ENCODE measurements at regions of chr22 and their contacts with region 1.

Region 1: GRCh38 chr22:20156611-20157429 is 6.0 kb upstream of the CCDC188 start:
- DNase-seq: peak; percentile 78 to 95 (median 92)
- ATAC-seq: peak; percentile 63 to 68
- H3K4me3 ChIP-seq: no peak overlapping the region
- H3K27ac ChIP-seq: no peak overlapping the region
- H3K4me1 ChIP-seq: no peaks in the 10 kb centered on the region
- H3K27me3 ChIP-seq: no peaks in the 10 kb centered on the region

Region 2: DNA sequence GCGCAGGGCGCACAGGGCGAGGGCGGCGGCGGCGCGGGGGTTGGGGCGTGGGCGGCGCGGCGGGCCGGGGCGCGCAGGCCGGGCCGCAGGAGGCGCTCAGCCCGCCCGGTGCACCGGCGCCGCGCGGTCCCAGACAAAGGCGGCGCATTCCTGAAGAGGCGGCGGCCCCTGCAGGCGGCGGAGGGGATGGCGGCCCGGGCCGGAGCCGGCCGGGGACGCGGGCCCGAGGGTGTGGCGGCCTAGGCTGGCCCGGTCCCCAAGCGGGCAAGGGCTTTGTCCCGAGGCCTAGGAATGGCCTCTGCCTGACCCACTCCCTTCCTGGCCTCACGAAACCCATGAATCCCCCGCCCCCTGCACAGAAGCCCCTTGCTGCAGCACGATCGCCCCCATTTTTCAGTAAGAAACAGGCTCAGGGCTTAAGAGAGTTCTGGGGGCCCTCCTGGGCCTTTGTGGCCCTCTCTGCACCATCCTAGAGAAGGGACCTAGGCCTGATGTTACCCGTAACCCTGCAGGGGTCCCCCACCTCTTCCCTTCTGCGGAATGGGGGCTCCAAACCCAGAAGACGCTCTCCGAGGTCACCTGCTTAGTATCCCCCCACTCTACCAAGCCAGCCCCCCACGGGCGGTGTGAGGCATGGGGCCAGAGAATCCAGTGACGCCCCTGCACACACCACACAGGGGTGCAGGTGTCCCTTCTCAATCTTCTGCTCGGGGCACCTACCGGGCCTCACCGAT is 111.6 kb after region 1 on chr22 and contains the start of gene RTN4R:
- intact Hi-C with region 1: loop called in 3 of 4 experiments (anchors 1 to 5 kb)
- DNase-seq: peak; percentile 70 to 88 (median 87)
- ATAC-seq: peak; percentile 82 to 84
- H3K4me3 ChIP-seq: peak within 1 kb of the TSS; percentile 75
- H3K27ac ChIP-seq: no peak within 1 kb of the TSS
- H3K4me1 ChIP-seq: no peaks in the 10 kb centered on the region
- H3K27me3 ChIP-seq: no peaks in the 10 kb centered on the region
- total RNA-seq, gene RTN4R: 0.56 to 1.9 (median 1.2) TPM

Region 3: GRCh38 chr22:20279662-20280134 is 122.9 kb after region 1 on chr22:
- intact Hi-C with region 1: loop called (anchors 2 to 5 kb)
- DNase-seq: no peak
- ATAC-seq: no peak
- H3K4me3 ChIP-seq: no peak overlapping the region
- H3K27ac ChIP-seq: no peak overlapping the region
- H3K4me1 ChIP-seq: no peaks in the 10 kb centered on the region
- H3K27me3 ChIP-seq: no peaks in the 10 kb centered on the region

Measured in right cardiac atrium (tissue), 5 donors.